ENCODE measurements at regions of chr1 and their contacts with region 1.

Region 1: DNA sequence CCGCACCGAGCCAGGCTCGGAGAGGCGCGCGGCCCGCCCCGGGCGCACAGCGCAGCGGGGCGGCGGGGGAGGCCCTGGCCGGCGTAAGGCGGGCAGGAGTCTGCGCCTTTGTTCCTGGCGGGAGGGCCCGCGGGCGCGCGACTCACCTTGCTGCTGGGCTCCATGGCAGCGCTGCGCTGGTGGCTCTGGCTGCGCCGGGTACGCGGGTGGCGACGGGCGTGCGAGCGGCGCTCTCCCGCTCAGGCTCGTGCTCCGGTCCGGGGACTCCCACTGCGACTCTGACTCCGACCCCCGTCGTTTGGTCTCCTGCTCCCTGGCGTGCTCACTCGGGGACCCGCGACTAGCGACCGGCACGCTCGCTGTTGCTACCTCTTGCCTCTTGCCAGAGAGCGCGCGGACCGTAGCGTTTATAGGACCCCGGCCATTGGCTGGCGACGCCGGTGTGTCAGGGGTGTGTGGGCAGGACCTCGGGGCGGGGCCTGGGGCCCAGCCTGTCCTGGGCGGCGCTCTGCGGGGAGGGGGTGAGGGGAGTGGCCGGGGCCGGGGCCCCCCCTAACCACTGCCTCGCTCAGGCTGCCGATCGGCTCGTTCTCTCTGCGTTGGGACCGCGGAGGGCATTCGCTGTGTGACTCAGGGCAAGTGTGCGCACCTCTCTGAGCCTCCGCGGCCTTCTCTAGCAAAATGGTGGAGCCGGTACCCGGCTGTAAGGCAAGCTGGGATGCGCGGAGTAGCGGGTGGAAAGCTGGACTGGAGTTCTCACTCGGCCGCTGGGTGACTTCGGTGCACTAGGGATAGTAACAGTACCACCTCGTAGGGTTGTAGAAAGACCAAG is at the start of gene SLC2A1:
- DNase-seq: peak; percentile 96
- ATAC-seq: peak; percentile 84
- H3K4me3 Mint-ChIP-seq: peak within 1 kb of the TSS; percentile 99
- H3K27ac Mint-ChIP-seq: peak within 1 kb of the TSS; percentile 94
- H3K4me1 Mint-ChIP-seq: peaks cover 68% of the 10 kb centered on the region
- H3K27me3 Mint-ChIP-seq: no peaks in the 10 kb centered on the region; the same call in 1 of the 2 replicates
- CTCF ChIP-seq: no peak
- total RNA-seq, gene SLC2A1: 215 to 415 TPM (median 396 TPM) in 3 replicates

Region 2: DNA sequence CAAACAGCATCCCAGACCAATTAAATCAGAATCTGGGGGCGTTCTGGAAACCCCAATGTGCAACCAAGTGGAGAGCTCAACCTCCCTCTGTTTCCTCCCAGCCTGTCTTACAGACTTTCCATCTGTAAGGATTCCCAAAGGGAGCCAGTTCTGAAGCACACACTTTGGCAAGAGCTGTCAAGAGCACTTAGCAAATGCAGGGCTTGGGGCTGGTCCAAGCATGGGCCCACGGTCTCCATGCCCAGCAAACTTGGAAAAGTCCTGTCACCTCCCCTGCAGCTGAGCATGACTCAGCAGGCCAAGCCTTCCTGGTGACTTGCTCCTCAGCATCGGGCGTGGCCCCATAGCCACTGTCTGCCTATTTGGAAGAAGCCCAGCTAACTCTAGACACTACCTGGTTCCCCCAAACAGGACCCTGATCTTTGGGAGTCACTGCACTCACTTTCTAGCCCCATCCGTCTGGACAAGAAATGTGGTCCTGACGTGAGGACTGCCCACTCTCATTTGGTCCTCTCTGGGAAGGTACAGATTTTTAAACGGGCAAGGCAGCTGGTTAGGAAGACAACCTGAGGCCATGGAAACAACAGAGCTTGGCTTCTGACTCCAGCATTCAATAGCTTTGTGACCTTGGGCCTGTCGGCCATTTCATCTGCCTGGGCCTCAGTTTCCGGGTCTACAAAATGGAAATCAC is 16.9 kb before region 1 on chr1:
- CTCF ChIA-PET with region 1: no interaction called
- POLR2A ChIA-PET with region 1: interaction called, 10 read pairs
- DNase-seq: no peak
- ATAC-seq: no peak
- H3K4me3 Mint-ChIP-seq: no peak overlapping the region
- H3K27ac Mint-ChIP-seq: peak overlapping the region; percentile 91
- H3K4me1 Mint-ChIP-seq: peaks cover 91% of the 10 kb centered on the region
- H3K27me3 Mint-ChIP-seq: no peaks in the 10 kb centered on the region
- CTCF ChIP-seq: no peak

Measured in WTC11 (cell line).